Endothelial cell of umbilical vein (primary cell): ENCODE measurements at regions of chr1 and their contacts with region 1.

Region 1: GRCh38 chr1:17236779-17237560 is 11.9 kb upstream of the PADI3 start:
- DNase-seq: peak; percentile 77
- H3K4me3 ChIP-seq: no peak overlapping the region
- H3K27ac ChIP-seq: no peak overlapping the region
- H3K4me1 ChIP-seq: peaks cover 18% of the 10 kb centered on the region
- H3K27me3 ChIP-seq: peaks cover 3% of the 10 kb centered on the region in 2 experiments
- CTCF ChIP-seq: peak; percentile 78 to 86
- POLR2A ChIP-seq: no peak

Region 2: DNA sequence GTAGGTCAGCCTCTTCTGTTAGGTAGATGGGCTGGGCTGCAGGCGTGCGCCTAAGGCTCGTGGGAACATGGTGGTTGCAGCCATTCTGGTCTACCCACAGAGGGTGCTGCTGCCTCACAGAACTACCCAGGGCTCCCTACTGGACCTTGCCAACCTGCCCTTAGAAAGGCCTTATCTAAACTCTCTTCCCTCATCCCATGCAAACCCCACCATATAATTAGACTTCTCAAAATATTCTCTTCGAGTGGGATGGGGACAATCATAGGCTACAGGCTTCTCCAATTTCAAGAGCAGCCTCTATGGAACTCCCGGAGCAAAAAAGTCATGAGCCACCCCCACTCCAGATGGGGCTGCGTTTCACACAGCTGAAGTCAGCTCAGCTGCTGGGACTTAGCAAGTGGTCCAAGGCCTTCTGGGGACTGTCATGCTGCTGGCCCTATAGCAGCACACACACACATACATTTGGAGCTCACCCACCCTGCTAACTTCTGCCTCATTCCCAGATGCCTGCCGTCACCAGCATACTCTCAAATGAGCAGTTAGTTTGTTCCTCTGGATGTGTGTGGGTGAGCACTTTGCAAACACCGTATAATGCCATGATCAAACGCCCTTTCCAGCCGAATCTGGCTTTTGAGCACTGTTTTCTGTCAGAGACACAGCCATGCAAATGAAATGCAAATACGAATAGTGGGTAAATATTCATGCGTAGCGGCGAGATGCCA is 177.1 kb before region 1 on chr1:
- CTCF ChIA-PET with region 1: interaction called, 10 read pairs
- POLR2A ChIA-PET with region 1: no interaction called
- dilution Hi-C with region 1: no loop called
- intact Hi-C with region 1: loop called (anchors 1 kb)
- DNase-seq: peak; percentile 61
- H3K4me3 ChIP-seq: no peak overlapping the region
- H3K27ac ChIP-seq: no peak overlapping the region
- H3K4me1 ChIP-seq: peaks cover 5% of the 10 kb centered on the region
- H3K27me3 ChIP-seq: no peaks in the 10 kb centered on the region
- CTCF ChIP-seq: peak; percentile 66 to 88
- POLR2A ChIP-seq: no peak

Region 3: GRCh38 chr1:17190010-17190995 is 46.7 kb before region 1 on chr1:
- CTCF ChIA-PET with region 1: no interaction called
- POLR2A ChIA-PET with region 1: no interaction called
- dilution Hi-C with region 1: no loop called
- intact Hi-C with region 1: no loop called
- DNase-seq: no peak
- H3K4me3 ChIP-seq: no peak overlapping the region
- H3K27ac ChIP-seq: no peak overlapping the region
- H3K4me1 ChIP-seq: no peaks in the 10 kb centered on the region
- H3K27me3 ChIP-seq: no peaks in the 10 kb centered on the region
- CTCF ChIP-seq: no peak
- POLR2A ChIP-seq: no peak

Region 4: GRCh38 chr1:17250601-17251000 is 13.6 kb after region 1 on chr1:
- CTCF ChIA-PET with region 1: interaction called, 28 read pairs
- POLR2A ChIA-PET with region 1: no interaction called
- dilution Hi-C with region 1: no loop called
- intact Hi-C with region 1: no loop called
- DNase-seq: peak; percentile 45
- H3K4me3 ChIP-seq: no peak overlapping the region
- H3K27ac ChIP-seq: no peak overlapping the region
- H3K4me1 ChIP-seq: peaks cover 15% of the 10 kb centered on the region
- H3K27me3 ChIP-seq: no peaks in the 10 kb centered on the region
- CTCF ChIP-seq: no peak
- POLR2A ChIP-seq: no peak

Region 5: GRCh38 chr1:17335821-17336710 is 99.1 kb after region 1 on chr1:
- CTCF ChIA-PET with region 1: no interaction called
- POLR2A ChIA-PET with region 1: no interaction called
- dilution Hi-C with region 1: no loop called
- intact Hi-C with region 1: loop called (anchors 1 kb)
- DNase-seq: peak; percentile 33
- H3K4me3 ChIP-seq: no peak overlapping the region
- H3K27ac ChIP-seq: no peak overlapping the region
- H3K4me1 ChIP-seq: no peaks in the 10 kb centered on the region
- H3K27me3 ChIP-seq: no peaks in the 10 kb centered on the region
- CTCF ChIP-seq: peak; percentile 86 to 88
- POLR2A ChIP-seq: no peak

Region 6: GRCh38 chr1:17540255-17541001 is 303.5 kb after region 1 on chr1:
- CTCF ChIA-PET with region 1: no interaction called
- POLR2A ChIA-PET with region 1: no interaction called
- dilution Hi-C with region 1: no loop called
- intact Hi-C with region 1: no loop called
- DNase-seq: no peak
- H3K4me3 ChIP-seq: peak overlapping the region; percentile 34 to 77 (median 62)
- H3K27ac ChIP-seq: peak overlapping the region; percentile 25
- H3K4me1 ChIP-seq: no peaks in the 10 kb centered on the region
- H3K27me3 ChIP-seq: peaks cover 3 to 6% of the 10 kb centered on the region in 2 experiments
- CTCF ChIP-seq: no peak
- POLR2A ChIP-seq: no peak